WTC11 (cell line): ENCODE measurements at regions of chr19 and their contacts with region 1.

Region 1: DNA sequence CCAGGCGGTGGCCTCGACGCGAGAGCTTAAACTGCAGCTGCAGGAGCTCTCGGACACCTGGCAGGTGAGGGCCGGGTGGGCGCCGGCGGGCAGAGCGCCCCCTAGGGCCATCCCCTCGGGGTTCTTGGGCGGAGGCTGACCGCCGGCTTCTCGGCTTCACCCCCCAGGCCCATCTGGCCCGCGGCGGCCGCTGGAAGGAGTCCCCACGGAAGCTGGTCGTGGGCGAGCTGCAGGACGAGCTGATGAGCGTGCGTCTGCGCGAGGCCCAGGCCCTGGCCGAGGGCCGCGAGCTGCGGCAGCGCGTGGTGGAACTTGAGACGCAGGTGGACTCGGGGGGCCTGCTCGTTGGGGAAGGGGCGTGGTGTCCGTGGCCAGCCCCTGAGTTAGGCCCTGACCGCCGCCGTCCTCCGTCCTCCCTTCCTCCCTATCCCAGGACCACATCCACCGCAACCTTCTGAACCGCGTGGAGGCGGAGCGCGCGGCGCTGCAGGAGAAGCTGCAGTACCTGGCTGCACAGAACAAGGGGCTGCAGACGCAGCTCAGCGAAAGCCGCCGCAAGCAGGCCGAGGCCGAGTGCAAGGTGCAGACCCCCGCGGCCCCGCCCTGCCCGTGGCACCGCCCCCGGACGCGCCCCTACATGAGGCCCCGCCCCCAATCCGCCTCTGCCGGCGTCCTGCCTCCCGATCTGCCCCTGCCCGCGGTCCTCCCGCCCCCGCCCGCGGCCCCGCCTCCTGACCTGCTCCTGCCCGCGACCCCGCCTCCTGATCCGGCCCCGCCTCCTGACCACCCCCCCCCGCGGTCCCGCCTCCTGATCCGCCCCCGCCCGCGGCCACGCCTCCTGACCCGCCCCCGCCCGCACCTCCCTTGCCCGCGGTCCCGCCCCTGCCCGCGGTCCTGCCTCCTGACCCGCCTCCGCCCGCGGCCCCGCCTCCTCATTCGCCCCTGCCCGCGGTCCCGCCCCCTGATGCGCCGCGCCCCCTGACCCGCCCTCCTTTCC is 11.9 kb downstream of the PRR36 start:
- DNase-seq: peak; percentile 99
- ATAC-seq: peak; percentile 71
- H3K4me3 Mint-ChIP-seq: peak overlapping the region; percentile 79
- H3K27ac Mint-ChIP-seq: no peak overlapping the region
- H3K4me1 Mint-ChIP-seq: peaks cover 21% of the 10 kb centered on the region
- H3K27me3 Mint-ChIP-seq: peaks cover 77% of the 10 kb centered on the region
- CTCF ChIP-seq: peak; percentile 22; the same call in 1 of the 2 replicates

Region 2: DNA sequence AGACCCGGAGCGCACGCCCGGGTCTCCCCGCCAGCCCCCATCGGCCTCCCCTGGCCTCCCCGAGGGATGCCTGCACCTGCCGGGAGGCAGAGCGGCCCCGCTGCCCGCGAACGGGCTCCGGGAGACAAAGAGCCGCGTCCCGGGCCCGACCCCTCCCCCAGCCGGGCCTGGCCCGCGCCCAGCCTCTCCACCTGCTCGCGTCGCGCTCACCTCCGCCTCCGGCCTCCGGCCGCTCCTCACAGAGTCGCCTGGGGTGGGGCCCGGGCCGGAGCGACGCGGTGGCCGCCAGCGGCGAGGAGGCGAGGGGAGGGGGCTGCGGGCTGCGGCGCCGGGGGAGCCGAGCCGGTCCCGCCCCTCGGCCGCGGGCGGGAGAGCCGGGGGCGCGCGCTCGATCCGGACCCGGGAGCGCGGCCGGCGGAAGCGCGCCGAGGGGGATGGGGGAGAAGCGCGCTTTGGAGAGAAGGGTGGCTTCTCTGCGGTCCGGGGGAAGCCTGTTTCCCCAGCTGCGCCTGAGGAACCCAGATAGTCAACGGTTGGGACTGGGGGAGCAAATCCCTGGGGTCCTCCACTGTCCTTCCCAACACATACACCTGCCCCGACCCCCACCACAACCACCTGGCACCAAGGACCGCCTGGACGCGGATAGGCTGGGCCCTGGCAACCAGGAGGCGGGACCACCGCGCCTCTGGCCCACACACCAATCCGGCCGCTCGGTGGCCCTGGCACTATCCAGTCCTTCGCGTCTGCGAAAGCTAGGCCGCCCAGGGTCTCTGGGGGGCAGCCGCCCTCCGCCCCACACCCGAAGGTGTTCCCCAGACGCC is 12.0 kb after region 1 on chr19 and contains the start of gene PRR36:
- CTCF ChIA-PET with region 1: interaction called, 65 read pairs
- POLR2A ChIA-PET with region 1: interaction called, 19 read pairs
- DNase-seq: peak; percentile 88
- ATAC-seq: peak; percentile 61
- H3K4me3 Mint-ChIP-seq: peak within 1 kb of the TSS; percentile 93
- H3K27ac Mint-ChIP-seq: no peak within 1 kb of the TSS
- H3K4me1 Mint-ChIP-seq: peaks cover 19% of the 10 kb centered on the region
- H3K27me3 Mint-ChIP-seq: peaks cover 36% of the 10 kb centered on the region
- CTCF ChIP-seq: no peak
- total RNA-seq, gene PRR36: 21.9 to 34.3 TPM (median 31.0 TPM) in 3 replicates

Region 3: DNA sequence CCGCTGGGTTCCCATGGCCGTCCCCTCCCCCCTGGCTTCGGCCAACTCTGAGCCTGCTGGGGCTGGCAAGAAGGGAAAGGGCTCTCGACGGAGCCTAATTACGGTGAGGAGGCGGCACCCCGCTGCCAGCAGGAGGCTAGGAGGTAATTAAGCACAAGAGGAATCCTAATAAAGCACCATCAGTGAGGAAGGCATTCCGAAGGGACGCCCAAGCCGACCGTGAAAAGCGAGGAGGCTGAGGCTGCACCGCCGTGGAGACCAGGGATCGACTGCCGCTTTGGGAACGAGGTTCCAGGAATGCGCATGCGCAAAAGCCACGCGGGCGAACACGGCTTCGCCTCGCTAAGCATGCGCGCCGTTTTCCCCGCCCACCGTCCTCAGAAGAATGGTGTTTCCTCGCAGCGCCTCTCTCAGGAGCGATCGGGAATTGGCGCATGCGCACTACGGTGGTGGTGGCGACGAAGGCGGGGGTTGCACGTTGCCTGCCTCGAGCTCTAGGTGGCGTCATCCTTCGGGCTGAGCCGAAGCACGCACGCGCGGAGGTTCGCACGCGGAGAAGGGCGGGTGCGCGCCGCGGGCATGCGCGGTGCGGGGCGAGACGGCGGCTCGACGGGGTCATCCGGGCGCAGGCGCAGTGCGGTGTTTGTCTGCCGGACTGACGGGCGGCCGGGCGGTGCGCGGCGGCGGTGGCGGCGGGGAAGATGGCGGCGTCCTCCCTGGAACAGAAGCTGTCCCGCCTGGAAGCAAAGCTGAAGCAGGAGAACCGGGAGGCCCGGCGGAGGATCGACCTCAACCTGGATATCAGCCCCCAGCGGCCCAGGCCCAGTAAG is 41.2 kb after region 1 on chr19 and contains the start of gene MAP2K7:
- CTCF ChIA-PET with region 1: interaction called, 21 read pairs
- POLR2A ChIA-PET with region 1: interaction called, 8 read pairs
- DNase-seq: peak; percentile 100
- ATAC-seq: peak; percentile 87
- H3K4me3 Mint-ChIP-seq: peak within 1 kb of the TSS; percentile 90
- H3K27ac Mint-ChIP-seq: peak within 1 kb of the TSS; percentile 97
- H3K4me1 Mint-ChIP-seq: peaks cover 20% of the 10 kb centered on the region
- H3K27me3 Mint-ChIP-seq: peaks cover 13% of the 10 kb centered on the region
- CTCF ChIP-seq: no peak
- total RNA-seq, gene MAP2K7: 39.4 to 46.9 TPM (median 46.3 TPM) in 3 replicates

Region 4: DNA sequence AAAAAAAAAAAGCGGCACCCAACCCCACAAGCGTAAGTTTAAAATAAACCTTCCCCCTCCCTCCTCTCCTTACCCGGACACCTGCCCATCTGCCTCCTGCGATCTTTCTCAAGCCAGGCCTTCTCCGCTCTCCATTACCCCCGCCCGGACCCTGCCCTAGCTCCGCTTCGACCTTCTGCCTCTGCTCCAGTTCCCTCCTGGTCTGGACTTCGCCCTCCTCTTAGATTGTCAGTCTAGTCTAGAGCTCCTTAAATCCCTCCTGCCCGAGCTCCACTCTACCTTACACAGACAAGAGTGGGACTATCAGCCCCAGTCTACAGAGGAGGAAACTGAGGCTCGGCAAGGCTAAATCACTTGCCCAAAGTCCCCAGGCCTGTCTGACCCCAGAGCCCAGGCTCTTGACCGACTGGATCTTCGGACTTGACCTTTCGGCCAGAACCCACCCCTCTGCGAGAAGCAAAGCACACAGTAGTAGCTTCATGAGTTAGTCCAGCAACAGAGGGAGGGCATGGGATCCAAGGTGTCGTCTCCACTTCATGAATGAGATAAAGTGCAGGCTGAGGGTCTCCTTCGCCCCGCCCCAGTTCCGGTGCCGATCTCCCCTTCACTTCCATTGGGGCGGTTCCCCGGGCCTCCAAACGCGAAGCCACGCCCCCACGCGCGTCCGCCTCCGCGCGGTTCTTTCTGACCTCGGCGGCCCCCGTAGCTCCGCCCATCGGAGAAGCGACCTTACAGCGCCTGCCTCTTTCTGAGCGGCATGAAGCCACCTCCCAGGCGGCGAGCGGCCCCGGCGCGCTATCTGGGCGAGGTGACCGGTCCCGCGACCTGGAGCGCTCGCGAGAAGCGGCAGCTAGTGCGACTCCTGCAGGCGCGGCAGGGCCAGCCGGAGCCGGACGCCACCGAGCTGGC is 57.6 kb after region 1 on chr19 and contains the start of gene SNAPC2:
- CTCF ChIA-PET with region 1: interaction called, 23 read pairs
- POLR2A ChIA-PET with region 1: interaction called, 10 read pairs
- DNase-seq: peak; percentile 98
- ATAC-seq: peak; percentile 50
- H3K4me3 Mint-ChIP-seq: peak within 1 kb of the TSS; percentile 75
- H3K27ac Mint-ChIP-seq: peak within 1 kb of the TSS; percentile 76
- H3K4me1 Mint-ChIP-seq: peaks cover 8% of the 10 kb centered on the region
- H3K27me3 Mint-ChIP-seq: peaks cover 49% of the 10 kb centered on the region
- CTCF ChIP-seq: no peak
- total RNA-seq, gene SNAPC2: 23.2 to 24.3 TPM (median 23.7 TPM) in 3 replicates